KBM-7 (cell line): ENCODE measurements at regions of chr1 and their contacts with region 1.

Region 1: DNA sequence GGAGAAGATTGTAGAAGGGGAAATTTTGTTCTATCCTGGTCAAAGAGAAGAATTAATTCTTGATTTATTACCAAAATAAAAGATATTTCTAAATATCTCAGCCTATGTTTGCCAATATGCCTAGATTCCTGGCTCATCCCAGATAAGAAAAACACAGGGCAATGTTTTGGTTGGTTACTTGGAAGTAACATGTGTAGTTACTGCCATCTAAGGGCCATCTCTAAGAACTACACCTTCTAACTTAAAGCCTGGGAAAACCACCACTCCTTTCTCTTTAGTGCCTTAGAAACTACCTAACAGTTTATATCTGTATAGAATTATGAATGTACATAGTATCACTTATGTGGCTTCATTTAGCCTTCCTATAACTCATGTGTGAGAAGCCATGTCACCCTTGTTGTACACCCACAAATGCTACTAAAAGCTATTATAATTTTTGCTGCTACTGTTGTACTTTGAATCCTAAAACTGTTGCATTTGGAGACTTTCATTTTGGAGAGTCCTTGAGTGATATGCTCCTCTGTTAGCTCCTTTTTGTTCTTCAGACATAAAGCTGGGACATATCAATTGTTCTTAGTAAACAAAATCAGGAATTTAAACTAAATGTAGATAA is 4.5 kb downstream of the AIM2 start:
- DNase-seq: peak; percentile 61

Region 2: DNA sequence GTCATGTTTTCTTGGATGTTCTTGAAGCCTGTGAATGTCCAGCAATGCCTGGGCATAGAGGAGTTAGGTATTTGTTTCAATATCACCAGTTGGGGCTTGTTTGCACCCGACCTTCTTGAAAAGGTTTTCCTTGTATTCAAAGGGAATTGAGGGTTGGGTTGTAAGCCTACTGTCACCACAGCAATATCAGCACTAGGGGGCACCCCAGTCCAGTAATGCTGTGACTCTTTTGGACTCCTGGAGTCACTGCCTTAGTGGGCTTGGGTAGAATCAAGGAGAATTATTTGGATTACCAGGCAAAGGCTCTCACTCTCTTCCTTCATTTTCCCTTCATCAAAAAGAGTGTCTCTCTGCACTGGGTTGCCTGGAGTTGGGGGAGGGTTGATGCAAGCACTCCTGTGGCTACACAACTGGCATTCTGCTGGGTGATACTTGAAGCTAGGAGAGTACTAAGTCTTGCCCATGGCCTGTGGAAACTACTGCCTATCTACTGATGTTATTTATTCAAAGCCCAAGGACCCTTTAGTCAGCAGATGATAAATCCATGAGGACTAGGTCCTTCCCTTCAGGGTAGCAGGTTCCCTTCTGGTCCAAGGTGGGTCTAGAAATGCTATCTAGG is 565.6 kb before region 1 on chr1:
- in situ Hi-C with region 1: loop called (anchors 25 kb)
- DNase-seq: peak; percentile 56

Region 3: DNA sequence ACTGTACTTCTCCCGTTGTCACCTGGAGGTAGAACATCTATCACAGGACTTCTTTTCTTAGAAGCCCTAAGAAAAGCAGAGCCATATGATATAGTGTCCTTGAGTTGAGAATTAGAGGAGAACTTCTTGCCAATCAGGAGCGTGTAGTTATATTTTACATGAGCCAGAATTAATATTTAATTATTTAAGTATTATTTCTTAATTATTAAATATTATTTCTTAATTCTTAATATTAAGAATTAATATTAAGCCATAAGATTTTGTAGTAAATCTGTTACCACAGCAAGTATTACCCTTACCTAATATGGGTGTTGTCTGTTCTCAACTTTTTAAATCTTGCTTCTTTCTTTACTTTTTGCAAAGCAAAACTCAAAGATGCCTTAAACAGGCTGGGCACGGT is 505.4 kb after region 1 on chr1:
- in situ Hi-C with region 1: no loop called
- DNase-seq: no peak